Heart left ventricle (tissue), 16 donors: ENCODE measurements at regions of chr11 and their contacts with region 1.

Region 1: DNA sequence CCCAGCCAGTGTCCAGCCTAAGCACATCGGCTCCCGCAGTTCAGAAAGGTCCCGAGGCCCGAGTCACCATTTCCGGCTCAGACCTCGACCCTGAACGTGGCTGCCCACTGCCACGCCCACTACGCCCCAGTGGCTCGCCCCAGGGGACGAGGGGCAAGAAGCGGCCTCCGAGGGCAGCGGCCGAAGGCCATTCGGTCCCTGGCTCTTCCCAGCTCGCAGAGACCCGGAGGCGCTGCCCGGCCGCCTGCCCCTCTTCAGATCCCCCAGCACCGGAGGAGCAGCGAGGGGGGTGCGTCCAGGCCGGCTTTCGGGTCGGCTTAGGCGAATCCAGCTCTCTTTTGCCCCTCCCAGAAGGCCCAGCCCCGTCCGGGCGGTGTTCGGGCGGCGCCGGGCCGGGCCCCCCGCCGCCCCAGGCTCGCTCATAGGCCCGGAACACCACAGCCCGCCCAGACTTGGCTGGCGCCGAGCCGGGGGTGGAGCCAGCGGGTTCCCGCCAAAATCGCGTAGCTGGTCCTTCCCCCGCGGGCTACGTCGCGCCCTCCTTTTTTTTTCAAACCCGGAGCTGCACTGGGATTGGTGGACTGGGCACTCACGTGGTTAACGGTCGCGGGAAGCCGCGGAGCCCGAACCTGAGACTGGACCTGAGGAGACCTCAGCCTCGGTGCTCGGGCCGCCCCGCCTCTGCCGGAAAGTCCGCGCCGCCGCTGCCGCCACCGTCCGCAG is at the start of gene WEE1:
- DNase-seq: peak; percentile 98 to 100 (median 98)
- ATAC-seq: peak; percentile 86 to 97 (median 94)
- H3K4me3 ChIP-seq: peak within 1 kb of the TSS; percentile 42 to 90 (median 78)
- H3K27ac ChIP-seq: peak within 1 kb of the TSS; percentile 86 to 98 (median 96)
- H3K4me1 ChIP-seq: peaks cover 0 to 52% (median 20%) of the 10 kb centered on the region in 12 donors
- H3K27me3 ChIP-seq: no peaks in the 10 kb centered on the region
- CTCF ChIP-seq: no peak
- POLR2A ChIP-seq: peak in 1 of 2 donors; percentile 78
- total RNA-seq, gene WEE1: 33.0 to 89.2 (median 68.7) TPM

Region 2: DNA sequence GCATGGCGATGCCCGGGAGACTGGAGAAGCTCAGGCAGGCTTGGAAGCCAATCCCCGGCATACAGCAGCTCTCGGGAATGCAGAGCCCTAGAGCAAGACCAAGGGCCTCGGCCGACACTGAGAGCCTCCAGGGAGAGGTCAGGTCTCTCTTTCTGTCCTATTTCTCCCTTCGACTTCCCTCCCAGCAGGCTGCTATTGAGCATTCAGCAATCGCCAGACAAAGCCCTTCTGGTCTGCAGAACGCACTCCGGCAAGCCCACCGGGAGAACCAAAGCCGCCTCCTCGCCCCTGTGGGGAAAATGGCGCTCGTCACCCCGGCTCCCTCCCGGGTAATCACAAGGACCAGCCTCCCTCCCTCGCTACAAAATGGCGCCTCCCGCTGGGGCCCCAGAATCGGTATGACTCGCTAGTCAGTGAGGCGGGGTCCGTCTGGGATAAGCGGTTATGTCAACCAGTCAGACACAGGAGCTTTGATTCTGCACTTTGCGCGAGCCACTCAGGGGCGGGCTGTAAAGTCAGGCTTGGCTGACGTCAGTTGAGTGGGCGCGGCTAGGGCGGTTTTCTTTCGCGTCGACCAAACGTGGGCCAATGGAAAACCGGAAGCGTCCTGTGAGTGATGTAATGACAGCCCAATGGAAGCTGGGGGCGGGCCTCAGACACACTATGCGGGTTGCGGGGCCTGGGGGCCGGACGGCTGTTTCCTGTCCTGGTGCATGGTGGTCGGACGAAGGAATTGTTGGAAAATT is 112.7 kb before region 1 on chr11 and contains the start of gene ZNF143:
- intact Hi-C with region 1: loop called in 2 of 10 experiments (anchors 5 kb)
- DNase-seq: peak; percentile 100
- ATAC-seq: peak; percentile 96 to 99 (median 98)
- H3K4me3 ChIP-seq: peak within 1 kb of the TSS; percentile 80 to 99 (median 91)
- H3K27ac ChIP-seq: peak within 1 kb of the TSS; percentile 98 to 100 (median 100)
- H3K4me1 ChIP-seq: peaks cover 0 to 27% (median 20%) of the 10 kb centered on the region in 12 donors
- H3K27me3 ChIP-seq: no peaks in the 10 kb centered on the region
- CTCF ChIP-seq: peak in 1 of 12 donors; percentile 3
- POLR2A ChIP-seq: peak; percentile 76 to 91
- total RNA-seq, gene ZNF143: 16.8 to 32.3 (median 22.0) TPM

Region 3: DNA sequence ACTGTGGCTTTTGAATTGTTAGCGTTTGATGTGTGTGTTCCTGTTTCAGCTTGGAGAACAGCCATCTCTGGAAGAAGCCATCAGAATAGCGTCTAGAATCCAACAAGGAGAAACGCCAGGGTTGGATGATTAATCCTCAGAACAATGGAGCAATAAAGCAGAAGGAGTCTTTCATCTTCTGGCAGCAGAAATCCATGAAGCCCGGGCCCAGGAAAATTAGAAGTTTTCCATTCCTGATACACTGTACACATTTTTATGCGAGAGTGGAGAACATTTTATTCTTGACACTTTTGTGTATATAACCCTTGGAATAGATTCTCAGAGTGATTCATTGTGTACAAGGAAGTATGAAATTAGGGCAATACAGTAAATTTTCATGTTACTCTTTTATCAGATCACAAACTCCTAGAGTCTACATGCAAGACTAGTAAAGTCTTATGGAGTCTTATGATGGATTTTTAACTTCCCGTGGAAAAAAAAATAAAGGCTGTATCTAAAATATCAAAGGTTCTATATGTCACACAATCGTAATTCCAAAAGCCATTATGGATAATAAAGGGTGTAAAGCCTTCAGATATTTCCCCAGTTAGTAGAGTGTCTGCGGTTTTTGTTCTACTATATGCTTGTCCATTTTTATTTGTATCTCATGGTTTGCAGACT is 45.6 kb before region 1 on chr11:
- intact Hi-C with region 1: loop called in 1 of 10 experiments (anchors 5 kb)
- DNase-seq: no peak
- ATAC-seq: peak in 3 of 4 donors; percentile 50 to 74 (median 68)
- H3K4me3 ChIP-seq: no peak overlapping the region
- H3K27ac ChIP-seq: peak overlapping the region in 6 of 12 donors; percentile 25 to 78 (median 38)
- H3K4me1 ChIP-seq: peaks cover 0 to 28% (median 11%) of the 10 kb centered on the region in 12 donors
- H3K27me3 ChIP-seq: no peaks in the 10 kb centered on the region
- CTCF ChIP-seq: no peak
- POLR2A ChIP-seq: no peak

Region 4: DNA sequence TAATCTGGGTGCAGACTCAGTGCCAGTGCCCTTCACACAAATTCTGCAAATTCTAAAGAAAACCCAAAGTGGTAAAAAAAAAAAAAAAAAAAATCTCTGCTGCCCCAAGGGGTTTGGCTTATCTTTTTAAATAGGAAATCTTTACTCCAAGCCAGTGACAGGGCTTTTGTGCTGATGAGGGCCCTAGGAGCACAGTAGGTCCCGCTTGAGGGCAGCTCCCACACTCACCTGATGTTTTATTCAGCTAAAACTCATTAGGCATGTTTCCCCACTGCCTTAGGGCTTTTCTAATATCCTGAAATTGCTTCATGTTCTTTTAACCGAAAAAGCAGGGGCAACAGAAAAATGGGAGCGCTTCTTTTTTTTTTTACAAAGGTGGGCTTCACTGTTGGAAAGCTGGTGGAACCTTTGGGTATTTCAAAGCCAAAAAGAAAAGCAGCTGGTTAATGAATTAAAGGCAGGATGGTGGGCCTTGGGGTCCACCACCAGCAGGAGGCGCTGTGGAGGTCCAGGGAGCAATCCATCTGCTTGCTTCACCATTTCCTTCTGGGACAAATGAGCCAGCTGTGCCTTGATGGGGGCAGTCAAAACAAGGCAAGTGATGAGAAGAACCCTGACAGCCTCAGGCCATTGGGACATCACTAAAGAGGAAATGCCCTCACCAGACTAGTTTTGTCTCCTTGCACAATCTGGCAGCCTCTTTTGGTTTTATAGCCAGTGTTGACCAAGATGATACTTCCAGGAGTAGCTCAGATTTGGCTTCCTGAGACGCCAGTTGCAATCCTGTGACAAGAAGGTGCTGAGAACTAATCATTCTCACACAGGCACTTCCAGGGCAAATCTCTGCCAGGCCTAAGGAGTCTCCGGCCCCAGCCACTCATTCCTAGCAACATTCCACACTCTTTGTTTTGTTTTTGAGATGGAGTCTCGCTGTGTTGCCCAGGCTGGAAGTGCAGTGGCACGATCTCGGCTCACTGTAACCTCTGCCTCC is 38.1 kb before region 1 on chr11:
- intact Hi-C with region 1: loop called in 2 of 10 experiments (anchors 2 to 5 kb)
- DNase-seq: peak; percentile 62 to 88 (median 75)
- ATAC-seq: peak; percentile 49 to 87 (median 80)
- H3K4me3 ChIP-seq: no peak overlapping the region
- H3K27ac ChIP-seq: no peak overlapping the region
- H3K4me1 ChIP-seq: peaks cover 0 to 12% (median 2%) of the 10 kb centered on the region in 12 donors
- H3K27me3 ChIP-seq: no peaks in the 10 kb centered on the region
- CTCF ChIP-seq: peak; percentile 59 to 88 (median 74)
- POLR2A ChIP-seq: no peak